Aorta (tissue), 5 donors: ENCODE measurements at regions of chr7 and their contacts with region 1.

Region 1: DNA sequence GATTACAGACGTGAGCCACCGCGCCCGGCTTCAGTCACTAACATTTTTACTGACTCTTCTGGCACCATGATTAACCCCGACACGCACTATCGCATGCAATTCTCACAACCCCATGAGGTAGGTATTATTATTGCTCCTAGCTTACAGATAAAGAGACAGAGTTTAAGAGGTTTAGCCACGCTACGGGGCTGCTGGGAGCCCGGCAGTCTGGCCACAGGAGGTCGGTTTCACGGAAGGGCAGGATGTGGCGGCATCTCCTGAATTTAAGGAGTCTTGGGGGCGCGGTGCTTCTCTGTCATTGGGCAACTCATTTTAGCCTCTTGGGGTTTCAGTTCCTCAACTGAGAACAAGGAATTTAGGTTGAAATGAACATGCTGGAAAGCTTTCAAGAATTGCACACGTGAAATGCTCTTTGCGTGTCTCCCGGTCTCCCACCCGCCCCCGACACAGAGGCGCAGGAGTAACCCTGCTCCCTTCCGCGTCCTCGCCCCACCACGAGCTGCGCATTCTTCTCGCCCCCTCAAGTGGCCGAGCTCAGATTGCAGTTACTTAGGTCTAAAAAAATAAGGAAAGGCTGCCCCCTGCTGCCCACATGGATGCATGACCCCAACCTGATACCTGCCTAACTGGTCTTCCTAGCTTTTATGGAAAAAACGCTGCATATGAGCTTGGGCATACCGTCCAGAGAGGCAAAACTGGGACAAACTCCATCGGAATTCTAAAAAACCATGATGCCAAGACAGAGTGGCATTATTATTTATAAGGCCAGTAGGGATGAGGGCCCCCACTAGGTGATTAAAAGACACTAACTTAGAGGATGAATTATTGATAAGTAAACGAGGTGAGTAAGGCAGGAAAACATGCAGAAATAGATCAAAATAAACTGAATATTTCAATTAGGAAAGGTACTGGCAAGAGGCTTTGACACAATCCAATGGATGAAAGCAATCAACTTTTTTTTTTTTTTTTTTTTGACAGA is 12.4 kb downstream of the PRSS2 start:
- DNase-seq: peak; percentile 90 to 94
- ATAC-seq: peak; percentile 91
- H3K4me3 ChIP-seq: peak overlapping the region; percentile 0 to 29
- H3K27ac ChIP-seq: no peak overlapping the region
- H3K4me1 ChIP-seq: no peaks in the 10 kb centered on the region
- H3K27me3 ChIP-seq: no peaks in the 10 kb centered on the region

Region 2: DNA sequence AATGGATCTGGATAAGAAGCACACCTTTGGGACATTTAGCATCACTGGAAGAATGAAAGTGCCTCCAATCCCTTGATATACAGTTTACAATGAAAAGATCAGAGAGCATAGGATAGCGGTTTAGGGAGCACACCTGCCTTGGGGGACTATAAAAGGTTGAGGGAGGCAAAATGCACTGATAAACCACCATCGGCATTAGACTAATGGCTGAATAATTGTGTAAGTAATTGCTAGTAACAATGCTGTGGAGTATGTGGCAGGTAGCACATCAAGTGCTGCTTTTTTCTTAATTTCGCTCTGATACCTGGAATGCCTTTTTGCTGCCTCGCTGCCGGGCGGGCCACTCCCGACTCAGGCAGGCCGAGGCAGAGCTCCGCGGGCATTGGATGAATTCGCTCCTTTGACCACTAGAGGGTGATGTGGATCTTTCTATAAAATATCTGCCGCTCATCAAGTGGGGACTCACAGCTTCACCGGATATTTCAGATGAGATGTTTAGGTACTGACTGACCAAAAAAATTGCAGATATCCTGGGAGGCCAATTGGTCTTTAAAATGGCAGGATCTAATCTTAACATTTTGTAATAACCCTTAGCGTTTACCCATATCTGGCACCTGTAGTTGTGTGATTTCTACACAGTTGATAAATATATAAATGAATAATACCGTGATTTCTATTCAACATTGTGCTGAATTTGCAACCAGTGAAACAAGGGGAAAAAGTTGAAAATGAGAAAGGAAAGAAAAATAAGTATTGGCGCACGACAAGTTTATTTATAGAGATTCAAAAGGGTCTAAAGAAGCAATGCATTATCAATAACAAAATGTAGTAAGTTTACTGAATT is 150.7 kb before region 1 on chr7:
- intact Hi-C with region 1: loop called (anchors 1 to 10 kb)
- DNase-seq: no peak
- ATAC-seq: peak; percentile 74
- H3K4me3 ChIP-seq: no peak overlapping the region
- H3K27ac ChIP-seq: no peak overlapping the region
- H3K4me1 ChIP-seq: no peaks in the 10 kb centered on the region
- H3K27me3 ChIP-seq: no peaks in the 10 kb centered on the region

Region 3: GRCh38 chr7:142669074-142669654 is 114.0 kb before region 1 on chr7:
- intact Hi-C with region 1: loop called (anchors 5 kb)
- DNase-seq: no peak
- ATAC-seq: no peak
- H3K4me3 ChIP-seq: no peak overlapping the region
- H3K27ac ChIP-seq: no peak overlapping the region
- H3K4me1 ChIP-seq: no peaks in the 10 kb centered on the region
- H3K27me3 ChIP-seq: no peaks in the 10 kb centered on the region

Region 4: DNA sequence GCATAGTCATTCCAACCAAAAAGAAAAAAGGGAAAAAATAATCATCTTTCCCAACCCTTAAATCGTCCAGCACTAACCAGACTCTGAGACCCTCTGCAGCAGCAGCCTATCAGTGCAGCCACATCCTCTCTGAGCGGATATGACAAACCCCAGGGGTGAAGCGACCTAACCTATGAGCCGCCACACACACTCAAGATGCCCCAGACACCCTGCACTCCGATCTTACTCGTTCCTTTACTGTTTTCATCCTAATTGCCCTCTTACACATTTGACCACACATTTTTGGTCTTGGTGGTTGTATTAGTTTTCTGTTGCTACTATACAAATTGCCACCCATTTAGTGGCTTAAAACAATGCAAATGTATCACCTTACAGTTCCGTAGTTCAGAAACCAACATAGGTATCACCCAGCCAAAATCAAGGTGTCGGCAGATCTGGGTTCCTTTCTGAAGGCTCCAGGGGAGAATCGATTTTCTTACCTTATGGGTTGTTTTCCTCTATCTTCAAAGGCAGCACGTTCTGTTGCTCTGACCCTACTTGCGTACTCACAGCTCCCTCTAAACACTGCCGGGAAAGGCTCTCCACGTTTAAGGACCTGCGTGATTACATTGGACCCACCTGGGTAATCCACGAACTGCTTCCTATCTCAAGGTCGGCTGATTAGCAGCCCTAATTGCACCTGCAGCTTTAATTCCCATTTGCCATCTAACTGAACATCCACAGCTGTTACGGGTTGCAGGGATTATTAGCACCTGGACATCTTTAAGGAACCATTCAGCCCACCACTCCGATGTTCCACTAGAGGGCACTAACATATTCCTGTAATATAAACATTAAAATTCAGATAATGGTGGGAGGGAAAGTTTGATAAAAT is 71.2 kb before region 1 on chr7:
- intact Hi-C with region 1: loop called (anchors 1 to 2 kb)
- DNase-seq: no peak
- ATAC-seq: no peak
- H3K4me3 ChIP-seq: no peak overlapping the region
- H3K27ac ChIP-seq: no peak overlapping the region
- H3K4me1 ChIP-seq: no peaks in the 10 kb centered on the region
- H3K27me3 ChIP-seq: no peaks in the 10 kb centered on the region

Region 5: GRCh38 chr7:142717453-142717852 is 65.8 kb before region 1 on chr7:
- intact Hi-C with region 1: loop called (anchors 1 to 2 kb)
- DNase-seq: no peak
- ATAC-seq: no peak
- H3K4me3 ChIP-seq: no peak overlapping the region
- H3K27ac ChIP-seq: no peak overlapping the region
- H3K4me1 ChIP-seq: no peaks in the 10 kb centered on the region
- H3K27me3 ChIP-seq: no peaks in the 10 kb centered on the region